ENCODE measurements at regions of chr4 and their contacts with region 1.

Region 1: DNA sequence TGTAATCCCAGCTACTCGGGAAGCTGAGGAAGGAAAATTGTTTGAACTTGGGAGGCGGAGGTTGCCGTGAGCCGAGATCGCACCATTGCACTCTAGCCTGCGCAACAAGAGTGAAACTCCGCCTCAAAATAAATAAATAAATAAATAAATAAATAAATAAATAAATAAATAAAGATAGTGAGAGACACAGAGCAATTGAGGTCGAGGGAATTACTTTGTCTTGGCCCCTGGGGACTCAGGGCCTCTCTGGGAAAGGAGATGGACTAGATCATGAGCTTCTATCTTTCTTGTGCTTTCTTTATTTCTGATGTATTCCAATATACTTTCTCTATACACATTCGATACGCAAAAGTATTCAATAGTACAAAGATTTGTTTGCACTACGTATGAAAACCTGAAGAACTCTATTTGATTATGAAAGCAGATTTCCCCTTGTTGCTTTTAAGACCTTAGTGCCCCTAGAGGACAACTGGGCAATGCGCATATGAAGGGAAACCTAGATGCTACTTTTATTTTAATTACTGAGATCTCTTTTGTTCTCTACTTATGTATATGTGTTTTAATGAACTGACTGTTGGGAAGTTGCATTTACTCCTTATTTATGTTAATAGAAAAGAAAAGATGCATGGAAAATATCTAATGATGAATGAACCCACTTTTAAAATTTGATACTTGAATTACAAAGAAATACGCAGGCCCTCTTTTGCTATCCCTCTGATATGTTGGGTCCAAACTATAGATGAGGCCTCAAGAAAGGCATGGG is 12.8 kb upstream of the ELOVL6 start:
- DNase-seq: peak in 1 of 2 donors; percentile 59
- H3K4me3 ChIP-seq: no peak overlapping the region
- H3K27ac ChIP-seq: no peak overlapping the region
- H3K4me1 ChIP-seq: peaks cover 0 to 4% (median 0%) of the 10 kb centered on the region in 4 donors
- H3K27me3 ChIP-seq: no peaks in the 10 kb centered on the region
- CTCF ChIP-seq: peak in 5 of 7 experiments; percentile 45 to 74 (median 69)
- EP300 ChIP-seq: no peak
- POLR2A ChIP-seq: no peak

Region 2: DNA sequence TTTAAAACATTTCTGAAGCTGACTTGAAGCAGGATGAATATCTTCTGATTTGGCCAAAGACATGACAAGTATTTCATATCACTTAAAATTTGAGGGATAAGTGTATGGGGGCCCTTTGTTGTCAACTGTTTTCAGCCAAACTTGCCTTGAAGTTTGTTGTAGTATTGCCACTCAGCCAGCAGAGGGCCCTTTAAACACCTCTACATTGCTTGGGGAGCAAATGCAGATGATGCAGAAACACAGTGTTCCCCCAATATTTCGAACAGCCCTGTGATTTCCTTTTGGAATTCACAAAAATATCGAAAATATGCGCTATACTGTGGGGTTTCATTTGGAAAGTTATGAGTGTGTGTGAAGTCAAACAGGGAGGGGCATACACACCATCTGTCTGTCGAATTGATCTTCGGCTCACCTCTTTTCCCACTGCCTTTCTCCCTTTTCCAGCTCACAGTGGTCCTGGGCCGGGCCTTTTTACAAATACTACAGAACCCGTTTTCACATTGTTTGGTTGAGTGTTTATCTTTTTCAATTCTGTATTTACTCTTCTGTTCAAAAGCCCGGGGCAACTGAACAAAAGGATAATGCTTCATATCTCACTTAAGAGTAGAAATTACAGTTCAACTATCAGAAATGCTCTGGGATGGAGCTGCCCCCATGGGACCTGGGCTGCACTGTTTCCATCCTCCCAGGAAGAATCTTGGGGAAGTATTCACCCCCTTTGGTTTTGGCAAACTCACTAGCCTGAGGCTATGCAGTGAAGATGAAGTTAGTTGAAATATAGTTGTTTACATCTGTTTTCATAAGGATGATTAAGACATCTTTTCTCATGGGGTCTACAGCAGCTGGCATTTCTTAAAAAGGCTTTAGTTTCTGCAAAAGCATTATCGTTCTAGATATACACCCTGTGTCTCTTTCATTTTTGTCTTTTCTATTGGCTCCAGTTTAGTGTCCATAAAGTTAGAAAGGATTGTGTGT is 160.9 kb before region 1 on chr4:
- intact Hi-C with region 1: loop called (anchors 5 kb)
- DNase-seq: peak; percentile 47 to 70
- H3K4me3 ChIP-seq: no peak overlapping the region
- H3K27ac ChIP-seq: no peak overlapping the region
- H3K4me1 ChIP-seq: peaks cover 0 to 6% (median 0%) of the 10 kb centered on the region in 4 donors
- H3K27me3 ChIP-seq: no peaks in the 10 kb centered on the region
- CTCF ChIP-seq: peak in 5 of 7 experiments; percentile 33 to 80 (median 66)
- EP300 ChIP-seq: no peak
- POLR2A ChIP-seq: no peak